CD14-positive monocyte (primary cell): ENCODE measurements at regions of chr14 and their contacts with region 1.

Region 1: DNA sequence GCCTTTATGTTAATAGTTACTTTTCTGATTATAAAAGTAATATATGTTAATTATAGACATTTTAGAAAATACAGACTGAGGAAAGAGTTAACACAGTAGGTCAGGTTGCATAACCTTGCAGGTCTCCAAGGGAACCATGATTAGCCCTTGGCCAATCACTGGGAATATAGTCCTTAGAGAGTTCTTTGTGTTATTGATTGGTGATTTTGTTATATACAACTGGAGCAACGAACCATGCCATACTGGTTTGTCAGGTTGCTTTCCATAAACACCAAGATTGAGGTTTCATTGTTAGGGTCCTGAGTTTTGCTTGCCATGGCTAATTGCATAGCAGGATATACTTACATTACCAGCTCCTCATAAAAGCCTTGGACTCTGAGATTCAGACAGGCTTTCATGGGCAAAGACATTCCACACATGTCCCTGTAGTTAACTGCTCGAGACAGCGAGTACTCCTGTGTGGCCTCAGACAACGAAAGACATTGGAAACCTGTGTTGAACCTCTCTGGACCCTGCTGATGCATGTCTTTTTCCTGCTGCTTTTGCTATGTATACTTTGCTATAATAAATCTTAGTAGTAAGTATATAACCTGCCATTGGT is 33.7 kb downstream of the MAPK1IP1L start:
- DNase-seq: no peak
- H3K4me3 ChIP-seq: no peak overlapping the region
- H3K4me3 Mint-ChIP-seq: no peak overlapping the region
- H3K27ac ChIP-seq: no peak overlapping the region
- H3K27ac Mint-ChIP-seq: no peak overlapping the region
- H3K4me1 ChIP-seq: peaks cover 21% of the 10 kb centered on the region in 2 donors
- H3K4me1 Mint-ChIP-seq: peaks cover 16% of the 10 kb centered on the region
- H3K27me3 ChIP-seq: no peaks in the 10 kb centered on the region
- H3K27me3 Mint-ChIP-seq: no peaks in the 10 kb centered on the region
- CTCF ChIP-seq: no peak

Region 2: DNA sequence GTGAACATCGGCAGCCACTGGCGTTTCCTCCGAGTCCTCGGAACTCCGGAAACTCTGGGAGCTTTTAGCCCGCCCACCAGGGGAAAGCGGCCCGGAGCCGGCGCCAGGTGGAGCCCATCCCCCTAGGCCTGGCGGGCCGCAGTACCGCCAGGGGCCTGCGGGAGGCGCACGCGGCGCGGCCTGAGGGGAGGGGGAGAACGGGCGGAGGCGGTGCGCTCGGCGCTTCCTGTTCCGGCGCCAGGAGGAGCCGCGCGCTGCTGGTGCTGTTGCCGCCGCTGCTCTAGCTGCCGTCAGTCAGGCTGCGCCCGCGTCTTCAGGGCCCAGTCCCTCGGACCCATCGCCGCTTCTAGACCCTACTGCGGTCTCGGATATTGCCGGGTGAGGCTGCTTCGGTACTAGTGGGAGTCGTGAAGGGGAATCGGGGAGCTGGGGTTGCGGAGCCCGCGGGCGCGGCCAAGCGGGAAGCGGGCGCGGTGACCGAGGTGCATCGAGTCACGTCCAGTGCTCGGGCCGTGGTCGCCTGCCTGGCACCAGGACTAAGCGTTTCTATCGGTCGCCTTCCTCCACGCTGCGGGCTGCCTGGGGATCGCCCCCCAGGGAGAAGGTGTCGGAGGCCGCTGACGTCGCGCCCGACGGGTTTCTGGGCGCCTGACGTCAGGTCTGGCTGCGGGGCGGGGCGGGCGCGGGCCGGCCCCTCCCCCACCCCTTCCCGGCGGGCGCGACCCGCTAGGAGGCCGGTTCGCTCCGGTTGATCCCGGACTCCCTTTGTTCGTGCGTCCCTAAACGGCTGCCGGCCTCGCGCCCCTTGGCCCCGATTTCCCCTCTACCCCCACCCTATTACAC is 33.5 kb before region 1 on chr14 and contains the start of gene MAPK1IP1L:
- intact Hi-C with region 1: loop called in 1 of 2 experiments (anchors 5 kb)
- DNase-seq: peak; percentile 85 to 86 (median 86)
- H3K4me3 ChIP-seq: peak within 1 kb of the TSS; percentile 89 to 94 (median 90)
- H3K4me3 Mint-ChIP-seq: peak within 1 kb of the TSS; percentile 83 to 90
- H3K27ac ChIP-seq: peak within 1 kb of the TSS; percentile 91 to 99
- H3K27ac Mint-ChIP-seq: peak within 1 kb of the TSS; percentile 95 to 98 (median 97)
- H3K4me1 ChIP-seq: peaks cover 17 to 19% of the 10 kb centered on the region in 2 donors
- H3K4me1 Mint-ChIP-seq: peaks cover 27% of the 10 kb centered on the region
- H3K27me3 ChIP-seq: no peaks in the 10 kb centered on the region
- H3K27me3 Mint-ChIP-seq: peaks cover 0 to 3% (median 2%) of the 10 kb centered on the region in 3 donors
- CTCF ChIP-seq: peak; percentile 100
- polyA plus RNA-seq, gene MAPK1IP1L: 44.8 to 89.8 (median 67.8) TPM

Region 3: GRCh38 chr14:55160989-55161388 is 75.8 kb after region 1 on chr14:
- intact Hi-C with region 1: loop called in 1 of 2 experiments (anchors 2 kb)
- DNase-seq: peak; percentile 21 to 64 (median 38)
- H3K4me3 ChIP-seq: no peak overlapping the region
- H3K4me3 Mint-ChIP-seq: no peak overlapping the region
- H3K27ac ChIP-seq: no peak overlapping the region
- H3K27ac Mint-ChIP-seq: peak overlapping the region in 2 of 7 donors; percentile 32 to 69
- H3K4me1 ChIP-seq: no peaks in the 10 kb centered on the region
- H3K4me1 Mint-ChIP-seq: no peaks in the 10 kb centered on the region
- H3K27me3 ChIP-seq: no peaks in the 10 kb centered on the region
- H3K27me3 Mint-ChIP-seq: no peaks in the 10 kb centered on the region
- CTCF ChIP-seq: peak; percentile 71